ENCODE measurements at regions of chr22 and their contacts with region 1.

Region 1: GRCh38 chr22:38843201-38843715 is 570 bp downstream of the NPTXR start:
- DNase-seq: peak; percentile 81
- ATAC-seq: peak; percentile 86
- H3K4me3 ChIP-seq: peak overlapping the region; percentile 41
- H3K27ac ChIP-seq: no peak overlapping the region; the same call in 1 of the 2 replicates
- H3K4me1 ChIP-seq: no peaks in the 10 kb centered on the region
- H3K27me3 ChIP-seq: peaks cover 25% of the 10 kb centered on the region
- CTCF ChIP-seq: peak; percentile 45
- POLR2A ChIP-seq: no peak
- RAD21 ChIP-seq: peak; percentile 47

Region 2: GRCh38 chr22:38788021-38788816 is 55.0 kb before region 1 on chr22:
- CTCF ChIA-PET with region 1: interaction called, 3 read pairs
- POLR2A ChIA-PET with region 1: no interaction called
- dilution Hi-C with region 1: no loop called
- in situ Hi-C with region 1: no loop called
- intact Hi-C with region 1: loop called (anchors 5 kb)
- DNase-seq: peak; percentile 96
- ATAC-seq: peak; percentile 91
- H3K4me3 ChIP-seq: no peak overlapping the region
- H3K27ac ChIP-seq: peak overlapping the region; percentile 28; the same call in 1 of the 2 replicates
- H3K4me1 ChIP-seq: peaks cover 16% of the 10 kb centered on the region
- H3K27me3 ChIP-seq: no peaks in the 10 kb centered on the region
- CTCF ChIP-seq: no peak
- POLR2A ChIP-seq: no peak
- RAD21 ChIP-seq: no peak

Region 3: DNA sequence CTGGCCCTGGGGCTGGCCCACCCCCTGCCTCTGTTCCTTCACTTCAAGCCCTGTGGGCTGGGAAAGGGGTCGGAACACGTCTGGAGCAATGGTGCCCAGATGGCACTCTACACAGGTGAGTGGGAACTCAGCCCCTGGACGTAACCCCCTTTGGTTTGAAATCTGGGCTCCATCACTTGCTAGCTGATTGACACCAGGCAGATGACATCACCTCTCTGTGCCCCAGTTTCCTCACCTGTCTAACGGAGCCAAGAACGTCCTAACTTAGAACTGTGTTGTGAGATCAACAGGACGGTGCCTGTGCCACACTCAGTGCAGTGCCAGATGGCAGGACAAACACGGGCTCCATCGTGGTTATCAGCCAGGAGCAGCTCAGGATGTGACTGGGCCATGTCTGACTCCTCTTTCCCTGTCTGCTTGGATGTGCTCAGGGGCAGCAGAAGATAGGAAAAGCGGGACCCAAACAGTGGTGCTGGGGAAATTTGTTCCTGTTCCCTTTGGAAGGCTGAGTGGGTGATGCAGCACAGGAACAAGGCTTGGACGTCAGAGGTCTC is 23.8 kb before region 1 on chr22:
- CTCF ChIA-PET with region 1: no interaction called
- POLR2A ChIA-PET with region 1: no interaction called
- dilution Hi-C with region 1: no loop called
- in situ Hi-C with region 1: no loop called
- intact Hi-C with region 1: loop called (anchors 1 kb)
- DNase-seq: no peak
- ATAC-seq: no peak
- H3K4me3 ChIP-seq: no peak overlapping the region
- H3K27ac ChIP-seq: no peak overlapping the region
- H3K4me1 ChIP-seq: no peaks in the 10 kb centered on the region
- H3K27me3 ChIP-seq: peaks cover 43% of the 10 kb centered on the region
- CTCF ChIP-seq: no peak
- POLR2A ChIP-seq: no peak
- RAD21 ChIP-seq: no peak